ENCODE measurements at regions of chr1 and their contacts with region 1.

Region 1: DNA sequence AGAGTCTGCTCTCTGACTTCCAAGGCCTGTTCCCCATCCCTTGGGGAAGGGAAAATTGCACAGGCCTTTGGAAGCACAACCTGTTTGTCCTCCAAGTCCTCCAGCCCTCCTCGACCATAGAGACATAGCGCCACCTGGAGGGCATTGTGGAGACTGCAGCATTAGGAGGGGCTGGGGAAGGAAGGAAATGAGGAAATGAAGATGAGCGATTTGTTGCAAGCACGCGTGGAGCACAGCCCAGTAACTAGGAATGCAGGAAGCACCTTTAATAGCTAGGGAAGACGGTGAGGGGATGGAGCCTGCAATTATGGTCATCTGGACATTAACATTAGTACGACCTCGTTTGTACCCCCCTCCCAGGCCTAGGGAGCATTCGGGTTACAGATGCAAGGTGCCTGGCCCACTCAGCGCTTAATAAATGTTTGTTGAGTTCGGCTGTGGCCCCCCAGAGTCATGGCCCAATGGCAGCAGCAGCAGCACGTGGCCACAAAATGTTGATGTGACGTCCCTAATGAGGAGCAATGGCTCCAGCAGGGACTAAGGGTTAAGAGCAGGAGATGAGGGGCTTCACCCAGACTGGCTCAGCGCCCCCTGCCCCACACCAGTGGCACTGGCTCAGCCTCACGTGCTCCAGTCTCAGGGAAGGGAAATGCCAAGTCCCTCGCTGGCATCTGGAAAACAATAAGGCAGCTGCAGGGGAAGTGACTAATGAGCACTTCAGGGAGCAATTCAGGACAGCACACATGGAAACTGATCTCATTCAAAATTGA is 8.0 kb upstream of the CAMK2N1 start:
- DNase-seq: peak; percentile 86
- CTCF ChIP-seq: peak; percentile 98

Region 2: GRCh38 chr1:19918057-19918456 is 576.0 kb before region 1 on chr1:
- in situ Hi-C with region 1: loop called (anchors 25 kb)
- DNase-seq: peak; percentile 91
- CTCF ChIP-seq: peak; percentile 77

Region 3: DNA sequence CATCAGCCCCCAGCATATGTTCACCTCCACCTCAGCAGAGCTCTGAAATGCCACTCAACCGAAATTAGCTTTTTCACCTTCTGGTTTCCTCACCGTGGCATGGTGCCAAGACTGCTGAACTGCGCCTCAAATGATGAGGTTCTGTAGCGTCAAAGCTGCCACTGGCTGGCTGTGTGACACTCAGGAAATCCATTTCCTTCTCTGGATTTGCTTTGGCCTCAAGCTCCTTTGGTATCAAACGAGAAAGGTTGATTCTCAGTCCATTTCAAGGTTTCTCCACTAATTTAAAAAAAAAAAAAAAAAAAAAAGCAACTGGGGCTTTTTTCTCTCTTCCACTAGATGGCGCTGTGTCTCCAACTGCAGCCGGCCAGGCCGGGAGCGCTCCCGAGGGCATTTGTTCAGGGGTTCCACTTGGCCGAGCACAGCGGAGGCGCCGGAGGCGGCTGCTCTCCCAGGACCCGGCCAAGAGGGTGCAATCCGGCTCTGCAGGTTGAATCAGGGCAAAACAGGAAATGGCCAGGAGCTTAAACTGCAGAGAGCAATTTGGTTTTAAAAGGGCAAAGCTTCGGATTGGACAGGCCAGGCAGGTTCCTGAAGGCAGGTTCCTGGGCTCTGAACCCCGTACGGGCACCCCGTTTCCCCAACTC is 281.2 kb before region 1 on chr1:
- in situ Hi-C with region 1: loop called (anchors 10 kb)
- DNase-seq: peak; percentile 81
- CTCF ChIP-seq: peak; percentile 30

Region 4: GRCh38 chr1:20376880-20377494 is 117.0 kb before region 1 on chr1:
- in situ Hi-C with region 1: loop called (anchors 10 kb)
- DNase-seq: peak; percentile 79
- CTCF ChIP-seq: peak; percentile 81